H1 (cell line): ENCODE measurements at regions of chr2 and their contacts with region 1.

Region 1: DNA sequence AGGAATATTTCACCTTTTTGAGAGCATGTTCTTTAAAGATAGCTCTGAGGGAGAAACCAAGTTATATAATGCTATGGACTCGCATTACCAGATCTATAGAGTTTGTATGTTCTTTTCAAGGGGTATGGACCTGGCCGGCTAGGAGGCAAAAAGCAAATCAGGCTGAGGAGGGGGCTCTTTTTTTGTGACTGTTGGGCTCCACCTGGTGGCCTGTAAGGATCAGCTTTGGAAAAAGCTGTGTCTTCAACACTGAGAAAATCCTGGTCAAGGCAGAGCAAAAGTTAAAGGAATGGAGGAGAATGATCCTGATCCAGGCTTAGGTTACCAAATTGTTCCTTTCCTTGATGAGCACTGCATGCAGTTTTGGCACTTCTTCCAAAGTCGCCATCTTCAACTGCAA is 180.5 kb downstream of the DIS3L2 start:
- DNase-seq: no peak
- H3K4me3 ChIP-seq: no peak overlapping the region
- H3K27ac ChIP-seq: no peak overlapping the region
- H3K4me1 ChIP-seq: no peaks in the 10 kb centered on the region
- H3K27me3 ChIP-seq: no peaks in the 10 kb centered on the region
- CTCF ChIP-seq: peak; percentile 41 to 91 (median 82)
- EP300 ChIP-seq: no peak
- POLR2A ChIP-seq: no peak
- RAD21 ChIP-seq: peak; percentile 86 to 91

Region 2: DNA sequence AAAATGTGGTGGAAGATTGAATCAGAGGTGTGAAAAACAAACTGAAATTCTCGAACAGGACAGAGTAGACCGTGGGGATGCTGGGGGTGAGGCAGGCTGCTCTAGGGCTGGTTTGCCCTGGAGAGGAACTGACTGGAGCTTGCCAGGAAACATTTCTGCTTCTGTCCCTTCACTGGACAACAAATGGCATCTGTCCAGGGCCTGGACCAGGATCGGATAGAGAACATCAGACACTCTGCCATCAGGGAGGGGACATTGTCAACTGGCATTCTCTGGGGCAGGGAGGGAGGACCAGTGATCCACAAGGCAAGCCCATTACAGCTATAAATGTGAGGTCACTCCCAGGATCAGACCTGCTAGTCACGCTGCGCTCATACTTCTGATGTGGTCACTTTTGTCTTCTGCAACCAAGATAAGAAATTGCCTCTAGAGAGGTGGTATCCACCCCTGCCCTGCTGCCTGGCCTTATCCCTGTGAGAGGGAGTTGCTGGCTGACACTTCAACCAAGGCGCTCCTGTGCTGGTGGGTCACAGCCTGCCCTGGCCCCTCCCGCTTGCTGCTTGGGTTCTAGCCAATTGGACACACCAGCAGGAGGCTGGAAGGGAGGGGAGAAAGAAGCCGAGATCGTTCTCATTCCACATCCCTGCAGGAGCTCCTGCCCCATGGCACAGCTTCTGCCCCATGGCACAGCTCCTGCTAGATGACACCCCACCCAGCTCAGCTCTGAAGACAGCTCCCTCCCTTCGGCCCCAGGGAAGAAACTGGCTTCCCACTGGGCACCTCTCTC is 224.6 kb before region 1 on chr2:
- CTCF ChIA-PET with region 1: interaction called, 24 read pairs
- POLR2A ChIA-PET with region 1: no interaction called
- DNase-seq: no peak
- H3K4me3 ChIP-seq: no peak overlapping the region
- H3K27ac ChIP-seq: no peak overlapping the region
- H3K4me1 ChIP-seq: peaks cover 0 to 2% (median 0%) of the 10 kb centered on the region in 4 experiments; a peak in 1 of 7 replicates
- H3K27me3 ChIP-seq: no peaks in the 10 kb centered on the region
- CTCF ChIP-seq: no peak
- EP300 ChIP-seq: no peak
- POLR2A ChIP-seq: no peak
- RAD21 ChIP-seq: no peak

Region 3: GRCh38 chr2:232113821-232114220 is 28.2 kb before region 1 on chr2:
- CTCF ChIA-PET with region 1: interaction called, 51 read pairs
- POLR2A ChIA-PET with region 1: no interaction called
- DNase-seq: no peak
- H3K4me3 ChIP-seq: no peak overlapping the region
- H3K27ac ChIP-seq: no peak overlapping the region
- H3K4me1 ChIP-seq: peaks cover 0 to 2% (median 0%) of the 10 kb centered on the region in 4 experiments; a peak in 3 of 7 replicates
- H3K27me3 ChIP-seq: no peaks in the 10 kb centered on the region
- CTCF ChIP-seq: no peak
- EP300 ChIP-seq: no peak
- POLR2A ChIP-seq: no peak
- RAD21 ChIP-seq: no peak

Region 4: GRCh38 chr2:232126301-232127099 is 15.5 kb before region 1 on chr2:
- CTCF ChIA-PET with region 1: interaction called, 51 read pairs
- POLR2A ChIA-PET with region 1: no interaction called
- DNase-seq: no peak
- H3K4me3 ChIP-seq: no peak overlapping the region
- H3K27ac ChIP-seq: no peak overlapping the region
- H3K4me1 ChIP-seq: peaks cover 0 to 3% (median 0%) of the 10 kb centered on the region in 4 experiments; a peak in 2 of 7 replicates
- H3K27me3 ChIP-seq: no peaks in the 10 kb centered on the region
- CTCF ChIP-seq: no peak
- EP300 ChIP-seq: no peak
- POLR2A ChIP-seq: no peak
- RAD21 ChIP-seq: no peak